ENCODE measurements at regions of chr17 and their contacts with region 1.

Region 1: DNA sequence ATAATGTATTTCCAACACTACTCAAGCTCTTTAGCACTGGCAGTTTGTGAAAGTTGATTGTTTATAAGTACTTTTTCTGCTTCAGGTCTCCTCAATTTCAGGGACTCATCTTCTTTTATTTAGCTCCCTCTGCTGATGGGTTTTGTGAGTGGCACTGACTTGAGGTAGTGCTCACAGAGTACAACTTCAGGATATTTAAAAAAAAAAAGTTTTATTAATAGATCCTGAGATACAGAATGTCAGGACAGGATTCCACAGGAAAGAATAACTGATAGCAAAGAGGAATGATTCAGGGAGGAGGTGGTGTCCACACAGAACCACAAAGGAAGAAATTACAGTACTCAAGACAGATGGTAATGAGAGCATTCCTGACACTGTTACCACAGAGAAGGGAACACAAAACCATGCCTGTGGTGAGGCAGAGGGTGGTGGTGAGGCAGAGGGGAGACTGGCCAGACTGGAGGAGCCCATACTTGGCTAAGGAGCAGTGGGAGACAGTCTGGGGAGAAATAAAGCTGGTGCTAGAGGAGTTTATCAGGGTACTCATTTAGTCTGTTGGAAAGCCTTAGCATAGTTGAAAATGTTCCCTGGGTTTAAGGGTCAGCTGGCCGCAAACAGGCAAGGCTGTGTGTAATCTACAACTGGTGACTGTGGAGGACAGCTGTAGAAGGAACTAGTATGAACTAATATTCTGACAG is 63.7 kb downstream of the SPAG9 start:
- DNase-seq: no peak
- ATAC-seq: peak; percentile 91

Region 2: DNA sequence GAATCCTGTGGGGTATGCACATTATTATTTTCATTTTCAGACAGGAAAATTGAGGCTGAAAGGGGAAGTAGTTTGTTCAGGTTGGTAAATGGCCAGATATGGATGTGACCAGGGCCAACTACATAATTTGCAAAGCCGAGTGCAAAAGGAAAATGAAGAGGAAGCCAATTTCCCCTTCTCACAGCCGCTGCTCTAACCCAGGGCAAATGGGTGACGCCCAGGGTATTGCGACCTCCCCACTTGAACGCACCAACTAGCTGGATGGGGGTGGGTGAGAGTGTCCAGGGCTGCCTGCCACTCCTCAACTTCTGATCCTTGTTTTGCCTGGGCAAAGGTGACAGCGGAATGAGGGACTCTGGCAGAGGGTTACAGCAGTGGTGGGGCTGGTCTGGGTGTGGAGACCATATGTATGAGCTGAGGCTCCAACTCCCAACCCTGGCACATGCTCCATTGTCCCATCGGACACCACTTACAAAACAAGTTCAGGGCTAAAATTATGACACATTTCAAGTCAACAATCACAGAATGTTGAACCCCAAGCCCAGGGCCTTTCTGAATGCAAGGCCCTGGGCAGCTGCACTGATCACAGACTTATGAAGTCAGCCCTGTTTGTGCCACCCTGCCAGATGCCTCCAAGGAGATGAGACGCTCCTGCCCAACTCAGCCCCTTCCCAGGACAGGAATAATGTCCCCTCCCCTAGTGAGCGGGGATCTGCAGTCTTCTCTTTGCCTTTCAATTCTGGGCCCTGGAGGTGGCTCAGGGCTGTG is 291.3 kb before region 1 on chr17:
- intact Hi-C with region 1: no loop called
- DNase-seq: no peak
- ATAC-seq: peak; percentile 42

Region 3: DNA sequence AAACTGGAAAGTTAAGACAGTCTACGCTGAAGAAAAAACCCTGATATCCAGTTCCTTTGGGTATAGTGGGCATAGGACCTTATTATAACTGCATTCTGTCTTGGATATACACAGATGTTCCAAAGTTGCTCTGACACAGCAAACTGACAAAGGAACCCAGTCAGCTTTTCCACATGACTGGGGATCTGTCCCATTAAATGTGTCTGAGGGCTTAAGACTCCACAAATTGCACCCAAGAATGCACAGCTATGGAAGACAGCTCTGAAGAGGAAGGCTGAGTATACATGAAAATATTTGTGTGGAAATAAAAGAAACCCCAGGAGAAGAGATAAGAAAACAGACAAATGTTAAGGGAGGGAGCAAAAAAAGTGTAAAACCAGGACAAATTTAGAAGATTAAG is 50.4 kb before region 1 on chr17:
- intact Hi-C with region 1: loop called (anchors 5 kb)
- DNase-seq: no peak
- ATAC-seq: no peak